ENCODE measurements at regions of chr2 and their contacts with region 1.

Region 1: GRCh38 chr2:150472511-150472899 is 15.0 kb downstream of the RND3 start:
- DNase-seq: no peak
- H3K4me3 ChIP-seq: no peak overlapping the region
- H3K27ac ChIP-seq: peak overlapping the region; percentile 36
- H3K4me1 ChIP-seq: peaks cover 55% of the 10 kb centered on the region
- H3K27me3 ChIP-seq: no peaks in the 10 kb centered on the region
- CTCF ChIP-seq: no peak

Region 2: GRCh38 chr2:149799013-149799705 is 673.3 kb before region 1 on chr2:
- CTCF ChIA-PET with region 1: interaction called, 3 read pairs
- dilution Hi-C with region 1: no loop called
- in situ Hi-C with region 1: loop called in 1 of 2 experiments (anchors 25 kb)
- intact Hi-C with region 1: no loop called
- DNase-seq: peak; percentile 16
- H3K4me3 ChIP-seq: no peak overlapping the region
- H3K27ac ChIP-seq: no peak overlapping the region
- H3K4me1 ChIP-seq: no peaks in the 10 kb centered on the region
- H3K27me3 ChIP-seq: no peaks in the 10 kb centered on the region
- CTCF ChIP-seq: peak; percentile 33 to 60

Region 3: GRCh38 chr2:150528861-150529801 is 56.6 kb after region 1 on chr2:
- CTCF ChIA-PET with region 1: no interaction called
- dilution Hi-C with region 1: no loop called
- in situ Hi-C with region 1: no loop called
- intact Hi-C with region 1: no loop called
- DNase-seq: peak; percentile 95
- H3K4me3 ChIP-seq: no peak overlapping the region
- H3K27ac ChIP-seq: peak overlapping the region; percentile 95
- H3K4me1 ChIP-seq: peaks cover 54% of the 10 kb centered on the region
- H3K27me3 ChIP-seq: no peaks in the 10 kb centered on the region
- CTCF ChIP-seq: no peak

Region 4: GRCh38 chr2:150555611-150556356 is 83.3 kb after region 1 on chr2:
- CTCF ChIA-PET with region 1: no interaction called
- dilution Hi-C with region 1: no loop called
- in situ Hi-C with region 1: no loop called
- intact Hi-C with region 1: no loop called
- DNase-seq: no peak
- H3K4me3 ChIP-seq: no peak overlapping the region
- H3K27ac ChIP-seq: no peak overlapping the region
- H3K4me1 ChIP-seq: peaks cover 15% of the 10 kb centered on the region
- H3K27me3 ChIP-seq: no peaks in the 10 kb centered on the region
- CTCF ChIP-seq: no peak

Measured in mammary epithelial cell (primary cell).